CD8-positive, alpha-beta T cell (primary cell): ENCODE measurements at regions of chr10 and their contacts with region 1.

Region 1: GRCh38 chr10:110244550-110244949 is 37.1 kb downstream of the MXI1 start:
- DNase-seq: no peak
- ATAC-seq: no peak
- H3K4me3 ChIP-seq: no peak overlapping the region
- H3K4me3 Mint-ChIP-seq: no peak overlapping the region
- H3K27ac ChIP-seq: no peak overlapping the region
- H3K27ac Mint-ChIP-seq: no peak overlapping the region
- H3K4me1 ChIP-seq: no peaks in the 10 kb centered on the region
- H3K4me1 Mint-ChIP-seq: peaks cover 18% of the 10 kb centered on the region
- H3K27me3 ChIP-seq: no peaks in the 10 kb centered on the region
- H3K27me3 Mint-ChIP-seq: no peaks in the 10 kb centered on the region
- CTCF ChIP-seq: no peak

Region 2: DNA sequence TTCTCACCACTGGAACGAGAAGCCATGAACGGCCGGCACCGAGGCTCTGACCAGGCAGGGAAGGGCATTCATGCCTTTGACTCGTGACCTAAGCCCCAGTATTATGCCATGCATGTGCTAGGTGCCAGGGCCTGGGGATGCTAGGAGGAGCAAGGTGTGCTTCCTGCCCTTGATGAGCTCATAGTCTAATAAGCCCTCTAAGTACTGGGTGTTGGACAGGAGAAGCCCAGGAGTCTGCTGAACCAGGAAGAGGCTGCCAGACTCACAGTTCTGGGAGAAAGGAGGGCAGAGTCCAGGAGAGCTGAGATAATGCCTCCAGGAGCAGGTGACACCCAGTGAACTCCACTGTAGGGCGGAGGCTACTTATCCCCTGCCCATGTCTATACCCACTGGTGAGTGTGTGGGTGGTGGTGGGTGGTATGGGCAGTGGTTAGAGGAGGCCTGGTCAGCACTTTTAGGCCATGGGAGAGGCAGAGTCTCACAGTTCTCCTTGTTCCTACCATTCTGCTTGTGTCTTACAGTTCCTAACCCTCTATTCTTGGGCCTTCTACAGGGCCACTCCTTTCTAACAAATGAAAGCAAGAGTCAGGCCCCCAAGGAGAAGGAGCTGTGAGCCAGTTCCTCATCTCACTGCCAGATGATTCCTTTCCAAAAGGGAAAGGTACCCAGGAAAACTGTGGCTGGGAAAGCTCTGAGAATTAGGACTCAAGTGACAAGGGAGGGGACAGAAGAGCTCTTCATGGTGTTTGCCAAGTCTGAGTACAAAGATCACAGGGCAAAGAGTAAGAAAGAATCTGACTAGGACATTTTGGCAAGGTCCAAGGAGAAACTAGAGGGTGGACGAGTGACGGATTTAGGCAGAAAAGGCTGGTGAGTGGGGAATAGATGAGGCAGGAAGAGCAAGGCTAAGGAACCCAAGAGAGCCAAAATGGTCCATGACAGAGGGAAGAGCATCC is 40.8 kb before region 1 on chr10:
- CTCF ChIA-PET with region 1: interaction called, 3 read pairs
- POLR2A ChIA-PET with region 1: interaction called, 3 read pairs
- intact Hi-C with region 1: loop called in 1 of 2 experiments (anchors 5 kb)
- DNase-seq: no peak
- ATAC-seq: no peak
- H3K4me3 ChIP-seq: no peak overlapping the region
- H3K4me3 Mint-ChIP-seq: no peak overlapping the region
- H3K27ac ChIP-seq: no peak overlapping the region
- H3K27ac Mint-ChIP-seq: no peak overlapping the region
- H3K4me1 ChIP-seq: peaks cover 7% of the 10 kb centered on the region
- H3K4me1 Mint-ChIP-seq: peaks cover 14% of the 10 kb centered on the region
- H3K27me3 ChIP-seq: peaks cover 0 to 9% of the 10 kb centered on the region in 2 experiments
- H3K27me3 Mint-ChIP-seq: peaks cover 30% of the 10 kb centered on the region
- CTCF ChIP-seq: no peak

Region 3: GRCh38 chr10:110260746-110261477 is 16.4 kb after region 1 on chr10:
- CTCF ChIA-PET with region 1: no interaction called
- POLR2A ChIA-PET with region 1: no interaction called
- intact Hi-C with region 1: loop called in 1 of 2 experiments (anchors 2 kb)
- DNase-seq: no peak
- ATAC-seq: no peak
- H3K4me3 ChIP-seq: no peak overlapping the region
- H3K4me3 Mint-ChIP-seq: no peak overlapping the region
- H3K27ac ChIP-seq: no peak overlapping the region
- H3K27ac Mint-ChIP-seq: no peak overlapping the region
- H3K4me1 ChIP-seq: no peaks in the 10 kb centered on the region
- H3K4me1 Mint-ChIP-seq: no peaks in the 10 kb centered on the region
- H3K27me3 ChIP-seq: no peaks in the 10 kb centered on the region
- H3K27me3 Mint-ChIP-seq: no peaks in the 10 kb centered on the region
- CTCF ChIP-seq: no peak